ENCODE measurements at regions of chr3 and their contacts with region 1.

Region 1: GRCh38 chr3:48609088-48610005 is at the start of gene UQCRC1:
- DNase-seq: peak; percentile 96
- ATAC-seq: peak; percentile 98
- H3K4me3 ChIP-seq: peak within 1 kb of the TSS; percentile 93
- H3K27ac ChIP-seq: peak within 1 kb of the TSS; percentile 51
- H3K4me1 ChIP-seq: peaks cover 15% of the 10 kb centered on the region
- H3K27me3 ChIP-seq: no peaks in the 10 kb centered on the region
- CTCF ChIP-seq: peak; percentile 70
- total RNA-seq, gene UQCRC1: 575 and 622 TPM in 2 replicates

Region 2: GRCh38 chr3:48543271-48543866 is 66.0 kb before region 1 on chr3:
- CTCF ChIA-PET with region 1: no interaction called
- POLR2A ChIA-PET with region 1: interaction called, 18 read pairs
- intact Hi-C with region 1: no loop called
- DNase-seq: no peak
- ATAC-seq: peak; percentile 31
- H3K4me3 ChIP-seq: no peak overlapping the region
- H3K27ac ChIP-seq: no peak overlapping the region
- H3K4me1 ChIP-seq: no peaks in the 10 kb centered on the region
- H3K27me3 ChIP-seq: no peaks in the 10 kb centered on the region
- CTCF ChIP-seq: no peak

Region 3: DNA sequence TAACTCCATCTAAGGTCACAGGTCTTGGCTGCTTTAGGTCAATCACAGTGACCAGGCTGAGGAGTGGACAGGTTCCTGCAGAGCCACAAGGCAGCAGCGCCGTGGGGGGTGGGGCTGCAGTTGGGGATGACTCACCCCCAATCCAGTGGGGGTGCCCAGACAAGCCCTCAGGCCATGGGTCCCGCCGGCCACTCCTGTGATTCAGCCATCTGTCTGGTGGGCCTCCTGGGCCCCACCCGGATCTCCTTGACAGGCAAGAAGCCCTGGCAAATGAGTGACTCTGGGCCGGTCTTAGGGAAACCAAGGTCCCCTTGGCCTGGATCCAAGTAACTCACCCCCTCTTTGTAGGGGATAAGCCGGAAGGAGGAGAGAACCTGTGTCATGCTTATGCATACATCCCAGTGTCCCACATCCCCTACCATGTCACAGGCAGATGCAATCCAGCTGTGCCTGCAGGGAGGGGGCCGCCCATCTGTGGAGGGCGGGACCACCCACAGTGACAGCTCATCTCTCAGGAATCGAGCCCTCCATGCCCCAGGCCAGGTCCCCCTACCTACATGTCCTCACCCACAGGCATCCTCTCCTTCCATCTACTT is 13.7 kb before region 1 on chr3:
- CTCF ChIA-PET with region 1: interaction called, 26 read pairs
- POLR2A ChIA-PET with region 1: no interaction called
- intact Hi-C with region 1: no loop called
- DNase-seq: peak; percentile 95
- ATAC-seq: peak; percentile 43
- H3K4me3 ChIP-seq: no peak overlapping the region
- H3K27ac ChIP-seq: peak overlapping the region; percentile 74
- H3K4me1 ChIP-seq: peaks cover 60% of the 10 kb centered on the region
- H3K27me3 ChIP-seq: no peaks in the 10 kb centered on the region
- CTCF ChIP-seq: no peak

Region 4: GRCh38 chr3:48635222-48636021 is 26.1 kb after region 1 on chr3 and contains the start of gene SLC26A6:
- CTCF ChIA-PET with region 1: no interaction called
- POLR2A ChIA-PET with region 1: no interaction called
- intact Hi-C with region 1: loop called (anchors 1 kb)
- DNase-seq: peak; percentile 98
- ATAC-seq: peak; percentile 95
- H3K4me3 ChIP-seq: peak within 1 kb of the TSS; percentile 90
- H3K27ac ChIP-seq: no peak within 1 kb of the TSS; the same call in 1 of the 2 replicates
- H3K4me1 ChIP-seq: peaks cover 26% of the 10 kb centered on the region
- H3K27me3 ChIP-seq: no peaks in the 10 kb centered on the region
- CTCF ChIP-seq: peak; percentile 74
- total RNA-seq, gene SLC26A6: 38.1 and 44.9 TPM in 2 replicates

Region 5: GRCh38 chr3:48926425-48927392 is 317.4 kb after region 1 on chr3:
- CTCF ChIA-PET with region 1: no interaction called
- POLR2A ChIA-PET with region 1: no interaction called
- intact Hi-C with region 1: no loop called
- DNase-seq: peak; percentile 39
- ATAC-seq: no peak
- H3K4me3 ChIP-seq: no peak overlapping the region
- H3K27ac ChIP-seq: no peak overlapping the region
- H3K4me1 ChIP-seq: peaks cover 29% of the 10 kb centered on the region
- H3K27me3 ChIP-seq: no peaks in the 10 kb centered on the region
- CTCF ChIP-seq: no peak